PC-3 (cell line): ENCODE measurements at regions of chr12 and their contacts with region 1.

Region 1: DNA sequence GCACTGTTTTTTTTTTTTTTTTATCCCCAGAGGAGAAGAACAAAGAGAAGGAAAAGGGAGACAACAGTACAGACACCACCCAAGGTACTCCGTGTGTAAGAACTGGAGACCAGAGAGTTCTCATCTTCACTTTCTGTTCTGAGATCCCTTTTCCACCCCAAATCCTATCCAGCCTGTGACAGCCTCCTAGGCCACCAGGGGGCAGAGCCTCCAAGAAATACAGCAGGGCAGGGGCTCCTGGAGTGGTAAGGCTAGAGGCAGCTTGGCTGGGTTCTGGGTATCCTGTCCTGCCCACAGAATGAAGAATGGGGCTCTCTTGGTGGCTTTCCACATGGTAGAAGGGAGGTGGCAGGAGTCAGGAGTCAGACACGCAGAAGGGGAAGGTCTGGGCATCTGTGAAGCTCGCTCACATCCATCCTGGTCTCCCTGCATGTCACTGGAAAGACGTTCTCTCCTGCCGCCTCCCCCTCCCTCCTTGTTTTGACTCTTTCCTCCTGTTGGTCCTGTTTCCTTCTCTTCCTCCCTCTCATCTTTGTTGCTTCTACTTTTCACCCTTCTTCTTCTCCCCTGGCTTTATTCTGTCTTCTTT is 12.0 kb downstream of the CLSTN3 start:
- DNase-seq: peak; percentile 58
- ATAC-seq: peak; percentile 81
- H3K4me3 ChIP-seq: no peak overlapping the region
- H3K27ac ChIP-seq: no peak overlapping the region
- H3K4me1 ChIP-seq: no peaks in the 10 kb centered on the region
- H3K27me3 ChIP-seq: no peaks in the 10 kb centered on the region
- CTCF ChIP-seq: peak; percentile 73

Region 2: GRCh38 chr12:7188562-7189397 is 46.6 kb after region 1 on chr12:
- CTCF ChIA-PET with region 1: no interaction called
- POLR2A ChIA-PET with region 1: no interaction called
- intact Hi-C with region 1: loop called (anchors 2 kb)
- DNase-seq: peak; percentile 61
- ATAC-seq: peak; percentile 61
- H3K4me3 ChIP-seq: peak overlapping the region; percentile 84
- H3K27ac ChIP-seq: peak overlapping the region; percentile 88
- H3K4me1 ChIP-seq: peaks cover 19% of the 10 kb centered on the region
- H3K27me3 ChIP-seq: no peaks in the 10 kb centered on the region
- CTCF ChIP-seq: peak; percentile 69